Activated naive CD8-positive, alpha-beta T cell treated with anti-CD3 and anti-CD28 coated beads, Interleukin-2, amount 10 ng/mL, durations not matched to agents 7 days and 5 days (primary cell): ENCODE measurements at regions of chr12 and their contacts with region 1.

Region 1: GRCh38 chr12:110468212-110469048 is at the starts of genes FAM216A and GPN3:
- DNase-seq: peak; percentile 94
- ATAC-seq: peak; percentile 84
- H3K4me3 Mint-ChIP-seq: peak within 1 kb of the TSS; percentile 98
- H3K27ac Mint-ChIP-seq: peak within 1 kb of the TSS; percentile 92
- H3K4me1 Mint-ChIP-seq: peaks cover 30% of the 10 kb centered on the region
- H3K27me3 Mint-ChIP-seq: no peaks in the 10 kb centered on the region
- total RNA-seq, gene FAM216A: 20.0 to 21.6 TPM
- total RNA-seq, gene GPN3: 22.9 to 23.4 TPM

Region 2: DNA sequence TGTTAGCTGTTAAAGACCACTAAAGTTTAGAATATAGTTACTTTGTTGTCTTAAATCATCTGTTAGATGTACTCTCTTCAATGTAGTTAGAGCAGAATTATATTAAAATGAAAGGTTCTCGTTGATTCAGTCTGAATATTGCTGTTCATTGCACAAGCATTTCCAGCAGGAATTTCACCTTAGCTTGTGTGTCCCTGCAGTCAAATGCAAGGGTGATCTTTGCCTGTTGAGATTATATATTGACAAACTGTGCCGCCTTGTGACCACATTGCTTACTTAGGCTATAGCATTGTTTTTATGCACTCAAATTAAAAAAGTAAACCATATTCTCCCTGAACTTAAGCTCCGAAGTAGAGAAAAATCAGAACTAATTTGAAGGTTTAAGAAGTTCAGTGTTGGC is 147.9 kb before region 1 on chr12:
- POLR2A ChIA-PET with region 1: no interaction called
- DNase-seq: no peak
- ATAC-seq: no peak
- H3K4me3 Mint-ChIP-seq: no peak overlapping the region
- H3K27ac Mint-ChIP-seq: peak overlapping the region; percentile 15
- H3K4me1 Mint-ChIP-seq: peaks cover 10% of the 10 kb centered on the region
- H3K27me3 Mint-ChIP-seq: no peaks in the 10 kb centered on the region

Region 3: DNA sequence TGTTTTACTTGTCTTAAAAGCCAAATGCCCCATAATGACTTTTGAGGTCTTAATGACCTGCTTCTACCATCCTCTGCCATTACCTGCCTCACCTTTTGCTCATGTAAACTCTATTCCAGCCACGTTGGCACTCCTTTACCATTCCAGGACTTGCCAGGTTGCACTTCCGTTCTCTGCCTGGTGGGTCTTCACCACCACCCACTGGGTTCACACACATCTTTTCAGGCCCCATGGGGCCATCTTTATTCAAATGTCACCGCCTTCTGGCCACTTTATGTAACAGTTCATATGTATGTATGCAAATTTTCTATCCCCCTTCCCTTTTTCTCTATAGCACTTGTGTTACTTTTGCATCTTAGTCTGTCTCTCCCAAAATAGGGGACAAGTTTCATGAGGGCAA is 129.7 kb before region 1 on chr12:
- POLR2A ChIA-PET with region 1: no interaction called
- DNase-seq: no peak
- ATAC-seq: no peak
- H3K4me3 Mint-ChIP-seq: no peak overlapping the region
- H3K27ac Mint-ChIP-seq: no peak overlapping the region
- H3K4me1 Mint-ChIP-seq: peaks cover 3% of the 10 kb centered on the region
- H3K27me3 Mint-ChIP-seq: no peaks in the 10 kb centered on the region

Region 4: DNA sequence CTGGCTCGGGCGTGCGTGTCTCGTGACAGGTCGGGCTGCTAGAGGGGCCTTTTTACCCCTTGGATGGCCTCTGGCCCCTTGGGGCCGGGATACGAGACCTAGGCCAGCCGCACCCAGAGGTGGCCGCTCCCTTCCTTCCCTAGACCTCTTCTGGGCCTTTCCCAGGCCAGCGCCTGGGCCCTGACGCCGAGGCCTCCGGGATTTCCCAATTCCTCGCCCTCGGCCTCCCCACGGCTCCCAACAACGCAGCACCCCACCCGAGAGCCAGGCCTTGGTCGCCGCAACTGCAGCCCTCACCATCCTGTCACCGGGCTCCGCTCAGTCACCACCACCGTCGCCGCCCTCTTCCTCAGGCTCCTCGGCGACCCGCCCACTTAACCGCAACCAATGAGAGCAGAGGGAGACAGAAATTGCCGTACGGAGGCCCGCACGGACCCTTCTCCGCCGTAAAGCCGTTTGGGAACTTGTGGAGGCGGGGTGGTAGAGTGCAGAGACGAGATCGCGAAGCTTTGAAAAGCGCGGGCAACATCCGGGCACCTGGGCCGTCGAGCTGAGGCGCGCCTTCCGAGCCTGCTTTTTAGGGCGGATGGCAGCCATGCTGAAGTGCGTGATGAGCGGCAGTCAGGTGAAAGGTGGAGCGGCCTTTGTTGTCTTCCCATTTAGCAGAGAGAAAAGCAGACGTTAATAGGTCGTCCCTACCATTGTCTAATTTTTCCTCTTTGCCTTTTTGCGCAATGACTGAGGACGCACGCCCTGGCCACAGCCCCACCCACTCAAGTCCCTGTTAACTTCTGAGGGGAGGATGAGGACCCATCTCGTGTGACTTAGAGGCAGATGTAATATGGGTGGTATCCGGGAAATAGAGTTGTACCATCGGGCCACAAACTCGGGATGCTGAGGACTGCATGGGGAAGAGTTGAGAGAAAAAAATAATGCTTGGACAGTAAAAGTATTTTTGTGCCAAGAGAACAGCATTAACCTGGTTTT is 33.6 kb after region 1 on chr12 and contains the starts of genes RAD9B and VPS29:
- POLR2A ChIA-PET with region 1: interaction called, 54 read pairs
- DNase-seq: peak; percentile 99
- ATAC-seq: peak; percentile 96
- H3K4me3 Mint-ChIP-seq: peak within 1 kb of the TSS; percentile 100
- H3K27ac Mint-ChIP-seq: peak within 1 kb of the TSS; percentile 100
- H3K4me1 Mint-ChIP-seq: peaks cover 29% of the 10 kb centered on the region
- H3K27me3 Mint-ChIP-seq: no peaks in the 10 kb centered on the region
- total RNA-seq, gene RAD9B: 1.8 to 2.3 TPM
- total RNA-seq, gene VPS29: 132 to 138 TPM

Region 5: GRCh38 chr12:110516995-110517394 is 48.6 kb after region 1 on chr12:
- POLR2A ChIA-PET with region 1: no interaction called
- DNase-seq: no peak
- ATAC-seq: no peak
- H3K4me3 Mint-ChIP-seq: no peak overlapping the region
- H3K27ac Mint-ChIP-seq: no peak overlapping the region
- H3K4me1 Mint-ChIP-seq: peaks cover 4% of the 10 kb centered on the region
- H3K27me3 Mint-ChIP-seq: no peaks in the 10 kb centered on the region

Region 6: DNA sequence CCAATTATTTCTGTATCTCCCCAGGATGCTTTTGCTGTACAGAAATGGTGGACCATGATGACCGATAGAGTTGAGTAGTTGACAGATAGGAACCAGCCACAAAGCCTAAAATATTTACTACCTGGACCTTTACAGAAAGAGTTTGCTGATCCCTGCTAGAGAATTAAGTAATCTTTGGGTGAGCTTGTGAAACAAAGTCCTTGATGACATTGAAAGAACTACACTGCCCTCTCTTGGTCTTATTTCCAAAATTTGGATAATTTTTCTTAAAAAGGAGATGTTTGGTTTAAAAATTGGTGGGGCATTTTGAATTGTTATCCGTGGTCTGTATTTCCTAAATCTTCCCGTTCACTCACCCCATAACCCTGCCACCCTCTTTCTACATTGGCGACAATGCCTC is 131.8 kb after region 1 on chr12:
- POLR2A ChIA-PET with region 1: interaction called, 22 read pairs
- DNase-seq: no peak
- ATAC-seq: peak; percentile 46
- H3K4me3 Mint-ChIP-seq: no peak overlapping the region
- H3K27ac Mint-ChIP-seq: no peak overlapping the region
- H3K4me1 Mint-ChIP-seq: peaks cover 10% of the 10 kb centered on the region
- H3K27me3 Mint-ChIP-seq: no peaks in the 10 kb centered on the region

Region 7: GRCh38 chr12:110606253-110606611 is 137.8 kb after region 1 on chr12:
- POLR2A ChIA-PET with region 1: interaction called, 22 read pairs
- DNase-seq: no peak
- ATAC-seq: no peak
- H3K4me3 Mint-ChIP-seq: peak overlapping the region; percentile 79
- H3K27ac Mint-ChIP-seq: peak overlapping the region; percentile 80
- H3K4me1 Mint-ChIP-seq: peaks cover 12% of the 10 kb centered on the region
- H3K27me3 Mint-ChIP-seq: no peaks in the 10 kb centered on the region

Region 8: DNA sequence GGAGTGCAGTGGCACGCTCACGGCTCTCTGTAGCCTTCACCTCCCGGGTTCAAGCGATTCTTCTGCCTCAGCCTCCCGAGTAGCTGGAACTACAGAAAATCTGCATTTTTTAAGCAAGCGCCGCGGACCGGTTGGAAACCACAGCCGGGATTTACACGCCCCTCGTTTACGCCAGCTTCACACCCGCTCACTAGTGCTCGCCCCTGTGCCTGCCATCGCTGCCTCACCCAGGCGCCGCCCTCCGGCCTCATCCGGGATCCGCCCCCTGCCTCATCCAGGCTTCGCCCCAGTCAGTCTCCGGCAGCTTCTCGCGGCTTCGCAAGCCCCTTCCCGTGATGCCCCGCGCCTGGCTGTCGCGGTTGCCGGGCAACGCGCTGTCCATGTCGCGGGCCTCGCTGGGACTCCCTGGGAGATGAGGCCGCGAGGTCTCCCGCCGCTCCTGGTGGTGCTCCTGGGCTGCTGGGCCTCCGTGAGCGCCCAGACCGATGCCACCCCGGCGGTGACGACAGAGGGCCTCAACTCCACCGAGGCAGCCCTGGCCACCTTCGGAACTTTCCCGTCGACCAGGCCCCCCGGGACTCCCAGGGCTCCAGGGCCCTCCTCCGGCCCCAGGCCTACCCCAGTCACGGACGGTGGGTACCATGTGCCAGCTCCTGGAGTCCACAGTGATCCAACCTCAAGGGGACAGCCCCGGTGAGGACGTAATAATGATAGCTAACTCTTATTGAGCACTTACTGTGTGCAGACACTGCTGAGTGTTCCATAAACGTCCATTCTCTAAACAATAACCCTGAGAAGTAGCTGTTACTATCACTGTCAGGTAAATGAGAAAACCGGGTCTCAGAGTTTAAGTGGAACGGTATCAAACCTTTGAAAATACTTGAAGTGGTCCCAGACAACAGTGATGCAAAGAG is 145.6 kb after region 1 on chr12 and contains the start of gene TCTN1:
- POLR2A ChIA-PET with region 1: interaction called, 11 read pairs
- DNase-seq: peak; percentile 97
- ATAC-seq: peak; percentile 100
- H3K4me3 Mint-ChIP-seq: peak within 1 kb of the TSS; percentile 85
- H3K27ac Mint-ChIP-seq: peak within 1 kb of the TSS; percentile 89
- H3K4me1 Mint-ChIP-seq: peaks cover 8% of the 10 kb centered on the region
- H3K27me3 Mint-ChIP-seq: peaks cover 2% of the 10 kb centered on the region
- total RNA-seq, gene TCTN1: 10.1 to 10.3 TPM